ENCODE measurements at regions of chr5 and their contacts with region 1.

Region 1: DNA sequence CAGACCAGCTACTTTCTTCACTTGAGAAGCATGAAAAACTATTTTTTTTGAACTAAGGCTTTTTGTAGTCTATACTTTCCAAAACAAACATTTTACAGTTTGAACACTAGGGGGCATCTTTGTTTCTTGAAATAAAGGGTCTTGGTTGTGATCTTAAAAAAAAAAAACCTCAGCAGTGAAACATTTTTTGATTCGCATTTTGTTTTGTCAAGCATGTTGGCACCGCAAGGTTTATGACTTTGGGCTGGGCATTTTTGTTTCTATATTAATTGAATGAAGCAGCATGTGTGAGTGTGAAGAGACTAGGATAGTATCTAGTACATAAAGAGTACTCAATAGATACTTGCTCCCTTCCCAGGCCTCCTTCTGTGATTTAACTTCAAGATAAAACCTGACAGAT is 31.6 kb upstream of the ACOT12 start:
- DNase-seq: peak; percentile 65
- ATAC-seq: no peak
- H3K4me3 ChIP-seq: no peak overlapping the region
- H3K27ac ChIP-seq: peak overlapping the region; percentile 42; the same call in 1 of the 2 replicates
- H3K4me1 ChIP-seq: peaks cover 21% of the 10 kb centered on the region
- H3K27me3 ChIP-seq: no peaks in the 10 kb centered on the region
- CTCF ChIP-seq: peak; percentile 57
- POLR2A ChIP-seq: no peak
- RAD21 ChIP-seq: peak; percentile 61

Region 2: GRCh38 chr5:81469676-81470075 is 44.1 kb after region 1 on chr5:
- CTCF ChIA-PET with region 1: no interaction called
- POLR2A ChIA-PET with region 1: no interaction called
- dilution Hi-C with region 1: no loop called
- in situ Hi-C with region 1: no loop called
- intact Hi-C with region 1: no loop called
- DNase-seq: no peak
- ATAC-seq: no peak
- H3K4me3 ChIP-seq: no peak overlapping the region
- H3K27ac ChIP-seq: no peak overlapping the region
- H3K4me1 ChIP-seq: no peaks in the 10 kb centered on the region
- H3K27me3 ChIP-seq: no peaks in the 10 kb centered on the region
- CTCF ChIP-seq: no peak
- POLR2A ChIP-seq: no peak
- RAD21 ChIP-seq: no peak

Region 3: DNA sequence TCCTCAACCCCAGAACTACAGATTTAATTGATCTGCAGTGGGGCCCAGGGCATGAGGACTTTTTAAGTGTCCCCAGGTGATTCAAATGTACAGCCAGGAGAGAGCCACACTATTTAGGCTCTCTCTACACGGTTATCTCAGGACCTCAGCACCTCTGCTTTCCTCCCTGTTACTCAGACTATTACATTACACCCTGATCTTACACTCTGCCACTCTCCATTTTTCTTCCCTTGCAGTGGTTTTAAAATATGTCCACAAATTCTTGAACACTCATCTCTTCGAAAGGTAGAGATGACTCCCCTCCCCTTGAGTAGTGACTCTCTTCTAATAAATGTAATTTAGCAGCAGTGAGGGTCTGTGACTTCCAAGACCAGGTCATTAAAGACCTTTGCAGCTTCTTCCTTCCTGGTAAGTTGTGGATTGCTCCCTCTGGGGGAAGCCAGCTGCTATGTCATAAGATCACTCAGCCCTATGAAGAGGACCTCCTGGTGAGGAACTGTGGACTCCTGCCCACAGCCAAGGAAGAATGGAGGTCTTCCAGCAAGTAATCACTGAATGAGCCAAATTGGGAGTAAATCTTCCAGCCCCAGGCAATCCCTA is 412.8 kb after region 1 on chr5:
- CTCF ChIA-PET with region 1: interaction called, 4 read pairs
- POLR2A ChIA-PET with region 1: no interaction called
- dilution Hi-C with region 1: no loop called
- in situ Hi-C with region 1: no loop called
- intact Hi-C with region 1: loop called (anchors 5 kb)
- DNase-seq: peak; percentile 49
- ATAC-seq: peak; percentile 77
- H3K4me3 ChIP-seq: no peak overlapping the region
- H3K27ac ChIP-seq: no peak overlapping the region
- H3K4me1 ChIP-seq: no peaks in the 10 kb centered on the region
- H3K27me3 ChIP-seq: no peaks in the 10 kb centered on the region
- CTCF ChIP-seq: peak; percentile 49
- POLR2A ChIP-seq: no peak
- RAD21 ChIP-seq: peak; percentile 61